Heart right ventricle (tissue), 16 donors: ENCODE measurements at regions of chr5 and their contacts with region 1.

Region 1: GRCh38 chr5:52948418-52949076 is 40.6 kb upstream of the ITGA2 start:
- DNase-seq: peak in 1 of 2 donors; percentile 64
- ATAC-seq: peak; percentile 78 to 96 (median 88)
- H3K4me3 ChIP-seq: no peak overlapping the region
- H3K27ac ChIP-seq: peak overlapping the region in 3 of 10 donors; percentile 1 to 28 (median 17)
- H3K4me1 ChIP-seq: peaks cover 0 to 22% (median 5%) of the 10 kb centered on the region in 9 donors
- H3K27me3 ChIP-seq: no peaks in the 10 kb centered on the region
- CTCF ChIP-seq: peak in 8 of 9 donors; percentile 37 to 80 (median 76)

Region 2: DNA sequence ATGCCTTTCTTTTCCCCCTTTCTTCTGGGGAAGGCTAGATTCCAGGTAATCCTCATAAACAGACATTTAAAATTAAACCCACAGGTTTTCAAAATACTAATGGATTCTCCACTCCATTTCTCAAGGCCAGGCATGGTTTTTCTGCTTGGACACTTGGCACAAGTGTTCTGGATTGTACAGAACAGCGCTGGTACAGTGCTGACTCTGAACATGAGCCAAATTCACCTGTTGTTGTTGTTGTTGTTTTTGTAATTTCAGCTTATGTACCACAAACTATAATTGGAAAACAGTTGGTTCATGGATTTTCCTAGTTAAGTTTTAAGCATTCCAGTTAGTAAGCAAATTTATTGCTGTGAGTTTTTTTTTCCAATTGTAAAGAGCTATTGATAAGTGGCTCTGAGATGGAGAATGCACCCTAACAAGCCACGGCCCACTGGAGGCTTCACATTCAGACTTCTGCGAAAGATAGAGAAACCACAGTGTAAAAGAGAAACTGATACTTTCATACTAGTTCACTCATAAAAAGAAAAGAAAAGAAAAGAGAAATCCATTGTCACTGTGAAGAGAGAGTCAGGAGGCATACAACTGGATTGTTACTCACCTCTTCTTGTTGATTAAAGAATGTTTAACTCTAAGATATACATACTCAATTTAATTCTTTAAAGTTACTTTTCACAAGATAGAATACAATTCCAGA is 177.1 kb before region 1 on chr5:
- intact Hi-C with region 1: no loop called
- DNase-seq: no peak
- ATAC-seq: no peak
- H3K4me3 ChIP-seq: no peak overlapping the region
- H3K27ac ChIP-seq: peak overlapping the region in 3 of 10 donors; percentile 79 to 87 (median 81)
- H3K4me1 ChIP-seq: peaks cover 0 to 39% (median 25%) of the 10 kb centered on the region in 9 donors
- H3K27me3 ChIP-seq: no peaks in the 10 kb centered on the region
- CTCF ChIP-seq: no peak

Region 3: GRCh38 chr5:52799983-52800393 is 148.6 kb before region 1 on chr5:
- intact Hi-C with region 1: no loop called
- DNase-seq: peak; percentile 94 to 98
- ATAC-seq: peak; percentile 92 to 98 (median 94)
- H3K4me3 ChIP-seq: peak overlapping the region; percentile 56 to 80 (median 68)
- H3K27ac ChIP-seq: peak overlapping the region; percentile 77 to 97 (median 94)
- H3K4me1 ChIP-seq: peaks cover 0 to 94% (median 71%) of the 10 kb centered on the region in 9 donors
- H3K27me3 ChIP-seq: no peaks in the 10 kb centered on the region
- CTCF ChIP-seq: no peak

Region 4: GRCh38 chr5:53084546-53085255 is 136.2 kb after region 1 on chr5:
- intact Hi-C with region 1: no loop called
- DNase-seq: no peak
- ATAC-seq: no peak
- H3K4me3 ChIP-seq: no peak overlapping the region
- H3K27ac ChIP-seq: no peak overlapping the region
- H3K4me1 ChIP-seq: peaks cover 0 to 6% (median 0%) of the 10 kb centered on the region in 9 donors
- H3K27me3 ChIP-seq: no peaks in the 10 kb centered on the region
- CTCF ChIP-seq: no peak

Region 5: DNA sequence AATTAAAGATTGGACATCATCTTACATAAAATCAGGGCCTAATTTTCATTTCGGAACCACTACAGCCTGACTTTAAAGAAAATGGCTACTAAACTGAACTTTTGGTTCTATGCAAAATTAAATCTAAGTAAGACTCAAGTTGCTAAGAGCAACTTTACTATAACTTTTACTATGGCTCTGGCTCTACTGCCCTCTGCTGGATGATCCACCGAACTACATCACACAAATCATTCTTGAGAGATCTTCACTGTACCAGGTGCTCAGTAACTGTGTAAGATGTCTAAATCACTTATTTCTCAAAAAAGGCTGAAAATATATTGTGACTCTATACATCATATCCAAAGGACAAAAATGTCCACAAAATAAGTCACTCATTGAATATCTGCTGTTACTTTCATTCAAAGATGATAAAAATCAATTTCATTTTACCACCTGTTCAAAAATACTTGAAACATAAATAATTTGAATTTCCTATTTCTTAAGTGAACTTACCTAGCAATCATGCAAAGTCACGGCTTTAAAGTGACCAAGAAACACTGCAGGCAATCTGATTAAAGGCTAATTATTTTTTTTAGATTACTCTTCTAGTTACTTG is 147.5 kb after region 1 on chr5:
- intact Hi-C with region 1: loop called (anchors 1 to 5 kb)
- DNase-seq: peak in 1 of 2 donors; percentile 69
- ATAC-seq: peak; percentile 47 to 88 (median 65)
- H3K4me3 ChIP-seq: no peak overlapping the region
- H3K27ac ChIP-seq: no peak overlapping the region
- H3K4me1 ChIP-seq: peaks cover 0 to 5% (median 0%) of the 10 kb centered on the region in 9 donors
- H3K27me3 ChIP-seq: no peaks in the 10 kb centered on the region
- CTCF ChIP-seq: peak; percentile 78 to 95 (median 87)